HepG2 (cell line): ENCODE measurements at regions of chr18 and their contacts with region 1.

Region 1: GRCh38 chr18:3062798-3063680 is 50.1 kb upstream of the LPIN2 start:
- DNase-seq: peak; percentile 72
- ATAC-seq: peak; percentile 81
- H3K4me3 ChIP-seq: peak overlapping the region; percentile 6 to 55 (median 18); a peak in 4 of 6 replicates
- H3K27ac ChIP-seq: peak overlapping the region; percentile 92
- H3K4me1 ChIP-seq: peaks cover 60% of the 10 kb centered on the region
- H3K27me3 ChIP-seq: no peaks in the 10 kb centered on the region
- CTCF ChIP-seq: peak; percentile 90
- EP300 ChIP-seq: peak in 1 of 2 experiments; percentile 25; a peak in 1 of 4 replicates
- POLR2A ChIP-seq: no peak
- RAD21 ChIP-seq: peak; percentile 80

Region 2: GRCh38 chr18:1865869-1866268 is 1197.2 kb before region 1 on chr18:
- CTCF ChIA-PET with region 1: no interaction called
- POLR2A ChIA-PET with region 1: no interaction called
- in situ Hi-C with region 1: no loop called
- intact Hi-C with region 1: no loop called
- DNase-seq: no peak
- ATAC-seq: no peak
- H3K4me3 ChIP-seq: no peak overlapping the region
- H3K27ac ChIP-seq: no peak overlapping the region
- H3K4me1 ChIP-seq: no peaks in the 10 kb centered on the region
- H3K27me3 ChIP-seq: no peaks in the 10 kb centered on the region
- CTCF ChIP-seq: no peak
- EP300 ChIP-seq: no peak
- POLR2A ChIP-seq: no peak
- RAD21 ChIP-seq: no peak

Region 3: GRCh38 chr18:2958819-2959298 is 104.2 kb before region 1 on chr18:
- CTCF ChIA-PET with region 1: no interaction called
- POLR2A ChIA-PET with region 1: no interaction called
- in situ Hi-C with region 1: no loop called
- intact Hi-C with region 1: no loop called
- DNase-seq: no peak
- ATAC-seq: peak; percentile 44; the same call in 2 of the 3 replicates
- H3K4me3 ChIP-seq: no peak overlapping the region
- H3K27ac ChIP-seq: peak overlapping the region; percentile 2
- H3K4me1 ChIP-seq: peaks cover 69% of the 10 kb centered on the region
- H3K27me3 ChIP-seq: no peaks in the 10 kb centered on the region
- CTCF ChIP-seq: no peak
- EP300 ChIP-seq: no peak
- POLR2A ChIP-seq: no peak
- RAD21 ChIP-seq: no peak

Region 4: DNA sequence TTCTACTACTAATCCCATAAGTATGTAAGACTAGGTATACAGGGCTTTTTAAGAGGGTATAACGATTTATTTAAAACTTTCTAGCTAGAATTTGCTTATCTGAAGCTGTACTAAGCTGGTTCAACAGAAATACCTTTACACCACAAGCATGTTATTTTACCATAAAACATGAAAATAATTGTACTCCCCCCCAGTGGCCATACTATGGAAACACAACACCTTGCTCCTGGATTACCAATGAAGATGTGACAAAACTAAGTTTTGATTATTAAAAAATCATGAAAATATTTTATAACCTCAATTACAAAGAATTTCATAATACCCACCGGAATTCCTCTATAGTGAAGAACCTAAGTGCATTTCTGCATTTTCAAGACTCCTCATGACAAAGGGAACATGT is 77.4 kb before region 1 on chr18:
- CTCF ChIA-PET with region 1: no interaction called
- POLR2A ChIA-PET with region 1: interaction called, 6 read pairs
- in situ Hi-C with region 1: no loop called
- intact Hi-C with region 1: loop called (anchors 2 kb)
- DNase-seq: peak; percentile 50
- ATAC-seq: no peak
- H3K4me3 ChIP-seq: no peak overlapping the region
- H3K27ac ChIP-seq: peak overlapping the region; percentile 81
- H3K4me1 ChIP-seq: peaks cover 99% of the 10 kb centered on the region
- H3K27me3 ChIP-seq: no peaks in the 10 kb centered on the region
- CTCF ChIP-seq: peak; percentile 36; the same call in 1 of the 2 replicates
- EP300 ChIP-seq: no peak
- POLR2A ChIP-seq: no peak
- RAD21 ChIP-seq: no peak

Region 5: GRCh38 chr18:3029215-3029952 is 33.7 kb before region 1 on chr18:
- CTCF ChIA-PET with region 1: no interaction called
- POLR2A ChIA-PET with region 1: interaction called, 4 read pairs
- in situ Hi-C with region 1: no loop called
- intact Hi-C with region 1: loop called (anchors 5 kb)
- DNase-seq: no peak
- ATAC-seq: no peak
- H3K4me3 ChIP-seq: peak overlapping the region in 1 of 3 experiments; percentile 18; a peak in 1 of 6 replicates
- H3K27ac ChIP-seq: peak overlapping the region; percentile 49
- H3K4me1 ChIP-seq: peaks cover 64% of the 10 kb centered on the region
- H3K27me3 ChIP-seq: no peaks in the 10 kb centered on the region
- CTCF ChIP-seq: no peak
- EP300 ChIP-seq: no peak
- POLR2A ChIP-seq: no peak
- RAD21 ChIP-seq: no peak

Region 6: GRCh38 chr18:3051718-3052410 is 11.2 kb before region 1 on chr18:
- CTCF ChIA-PET with region 1: no interaction called
- POLR2A ChIA-PET with region 1: interaction called, 3 read pairs
- in situ Hi-C with region 1: no loop called
- intact Hi-C with region 1: loop called (anchors 1 kb)
- DNase-seq: peak; percentile 99
- ATAC-seq: peak; percentile 93
- H3K4me3 ChIP-seq: peak overlapping the region in 2 of 3 experiments; percentile 18 to 41; a peak in 3 of 6 replicates
- H3K27ac ChIP-seq: peak overlapping the region; percentile 91
- H3K4me1 ChIP-seq: peaks cover 88% of the 10 kb centered on the region
- H3K27me3 ChIP-seq: no peaks in the 10 kb centered on the region
- CTCF ChIP-seq: no peak
- EP300 ChIP-seq: peak; percentile 95 to 99
- POLR2A ChIP-seq: no peak
- RAD21 ChIP-seq: no peak

Region 7: DNA sequence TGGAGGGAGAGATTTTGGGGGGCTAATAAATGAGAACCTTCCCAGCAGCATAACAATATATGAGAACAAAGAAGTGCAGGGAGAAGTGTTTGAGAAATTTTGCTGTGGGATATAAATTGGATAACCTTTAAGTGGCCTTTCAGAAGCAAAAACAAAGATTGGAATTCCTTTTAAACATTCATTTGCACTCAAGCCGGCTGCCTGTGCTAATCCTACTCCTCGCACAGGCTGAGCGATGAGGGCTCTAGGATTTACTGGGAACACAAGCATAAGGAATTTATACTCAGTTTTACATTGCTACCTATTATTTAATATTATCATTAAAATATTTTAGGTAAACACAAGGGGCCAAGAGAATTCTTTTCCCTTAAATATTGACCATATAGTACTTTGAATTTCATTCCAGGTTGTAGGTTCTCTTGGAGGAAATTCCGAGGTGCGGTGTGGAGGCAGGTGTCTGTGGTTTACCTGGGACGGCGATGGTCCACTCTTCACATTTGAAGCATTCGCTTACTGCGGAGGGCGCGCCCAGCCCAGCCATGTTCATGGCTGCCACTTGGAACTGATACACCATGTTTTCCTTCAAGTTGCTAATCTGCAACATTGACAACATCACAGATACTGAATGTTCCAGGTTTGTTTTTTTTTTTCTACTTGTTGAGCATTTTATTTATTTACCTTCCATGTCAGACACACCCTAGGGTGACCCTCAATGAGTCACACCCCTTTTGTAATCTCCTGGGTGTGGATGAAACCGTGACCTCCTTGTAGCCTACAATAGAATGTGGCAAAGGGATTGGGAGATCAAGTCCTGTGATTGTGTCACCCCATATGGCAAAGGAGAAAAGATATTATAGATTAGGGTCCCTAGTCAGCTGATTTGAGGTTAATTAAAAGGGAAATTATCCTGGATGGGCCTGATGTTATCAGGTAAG is 56.6 kb after region 1 on chr18:
- CTCF ChIA-PET with region 1: no interaction called
- POLR2A ChIA-PET with region 1: interaction called, 7 read pairs
- in situ Hi-C with region 1: no loop called
- intact Hi-C with region 1: loop called (anchors 5 kb)
- DNase-seq: peak; percentile 60
- ATAC-seq: no peak
- H3K4me3 ChIP-seq: no peak overlapping the region
- H3K27ac ChIP-seq: peak overlapping the region; percentile 97
- H3K4me1 ChIP-seq: peaks cover 72% of the 10 kb centered on the region
- H3K27me3 ChIP-seq: no peaks in the 10 kb centered on the region
- CTCF ChIP-seq: no peak
- EP300 ChIP-seq: peak in 1 of 2 experiments; percentile 58; a peak in 1 of 4 replicates
- POLR2A ChIP-seq: no peak
- RAD21 ChIP-seq: no peak